PC-9 (cell line): ENCODE measurements at regions of chr18 and their contacts with region 1.

Region 1: DNA sequence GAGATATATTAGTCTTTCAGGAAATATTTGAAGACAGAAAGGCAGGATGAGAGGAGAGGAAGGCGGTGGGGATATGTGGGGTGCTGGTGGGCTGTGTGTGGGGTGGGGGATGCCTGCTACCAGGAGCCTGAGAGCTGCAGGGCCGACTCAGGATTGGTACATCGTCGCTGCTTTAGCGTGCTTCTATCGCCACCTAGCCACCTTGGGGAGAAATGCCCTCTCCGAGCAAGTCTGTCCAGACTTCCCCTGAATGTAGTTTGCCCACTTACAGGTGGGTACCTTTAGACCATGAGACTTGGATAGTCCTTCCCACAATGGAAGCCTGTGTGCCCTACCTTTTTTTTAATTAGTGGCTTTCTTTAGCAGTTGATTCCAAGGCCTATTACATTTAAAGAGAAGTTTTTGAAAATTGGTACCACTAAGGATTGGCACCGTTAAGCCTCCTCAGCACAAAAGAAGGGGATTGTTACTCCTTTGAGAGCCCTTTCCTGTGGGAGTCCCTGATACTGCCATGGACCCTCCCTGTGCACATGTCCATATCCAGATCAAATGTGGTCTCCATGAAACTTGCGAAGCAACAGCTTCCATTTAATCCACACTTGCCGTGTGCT is 114.1 kb upstream of the NDUFV2 start:
- DNase-seq: peak; percentile 43 to 49
- H3K4me3 ChIP-seq: no peak overlapping the region
- H3K27ac ChIP-seq: no peak overlapping the region
- H3K4me1 ChIP-seq: no peaks in the 10 kb centered on the region; the same call in 1 of the 2 replicates
- H3K27me3 ChIP-seq: no peaks in the 10 kb centered on the region
- CTCF ChIP-seq: peak; percentile 85

Region 2: DNA sequence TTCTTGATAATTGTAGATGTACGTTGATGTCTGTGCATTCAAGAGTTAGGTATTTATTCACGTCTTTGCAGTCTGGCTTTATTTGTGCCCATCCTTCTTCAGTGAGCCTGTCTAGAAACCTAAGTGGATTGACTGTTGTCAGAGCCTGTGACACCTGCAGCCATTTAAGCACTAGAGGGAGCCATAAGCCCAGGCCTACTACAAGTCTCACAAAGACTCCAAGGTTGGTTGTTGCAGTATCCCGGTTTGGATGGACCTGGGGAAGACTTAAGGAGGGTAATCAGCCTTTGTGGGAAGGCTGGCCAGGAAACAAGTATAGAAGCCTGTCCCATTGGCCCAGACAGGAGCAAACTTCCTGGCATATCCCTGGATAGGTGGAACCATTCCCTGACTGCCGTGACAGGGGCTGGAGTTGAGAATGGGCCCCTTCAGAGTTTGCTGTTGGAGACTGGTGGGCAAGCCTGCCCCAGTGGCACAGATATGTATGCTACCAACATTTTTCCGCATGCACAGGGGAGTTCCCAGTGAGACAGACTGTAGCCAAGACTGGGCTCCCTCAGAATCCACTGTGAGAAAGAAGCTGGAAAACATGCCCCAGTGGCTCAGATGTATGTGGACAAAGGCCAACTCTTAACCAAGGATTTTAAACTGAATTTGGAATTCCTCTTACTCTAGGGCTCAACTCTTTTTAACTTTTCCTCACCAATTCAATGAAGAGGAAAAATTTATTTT is 1766.8 kb before region 1 on chr18:
- CTCF ChIA-PET with region 1: no interaction called
- POLR2A ChIA-PET with region 1: no interaction called
- intact Hi-C with region 1: loop called (anchors 10 kb)
- DNase-seq: peak; percentile 35 to 46
- H3K4me3 ChIP-seq: no peak overlapping the region
- H3K27ac ChIP-seq: no peak overlapping the region
- H3K4me1 ChIP-seq: no peaks in the 10 kb centered on the region
- H3K27me3 ChIP-seq: peaks cover 17% of the 10 kb centered on the region; the same call in 1 of the 2 replicates
- CTCF ChIP-seq: peak; percentile 76

Region 3: GRCh38 chr18:8426401-8426800 is 562.0 kb before region 1 on chr18:
- CTCF ChIA-PET with region 1: no interaction called
- POLR2A ChIA-PET with region 1: no interaction called
- intact Hi-C with region 1: loop called (anchors 5 kb)
- DNase-seq: no peak
- H3K4me3 ChIP-seq: no peak overlapping the region
- H3K27ac ChIP-seq: no peak overlapping the region
- H3K4me1 ChIP-seq: peaks cover 15% of the 10 kb centered on the region
- H3K27me3 ChIP-seq: no peaks in the 10 kb centered on the region
- CTCF ChIP-seq: peak; percentile 57

Region 4: DNA sequence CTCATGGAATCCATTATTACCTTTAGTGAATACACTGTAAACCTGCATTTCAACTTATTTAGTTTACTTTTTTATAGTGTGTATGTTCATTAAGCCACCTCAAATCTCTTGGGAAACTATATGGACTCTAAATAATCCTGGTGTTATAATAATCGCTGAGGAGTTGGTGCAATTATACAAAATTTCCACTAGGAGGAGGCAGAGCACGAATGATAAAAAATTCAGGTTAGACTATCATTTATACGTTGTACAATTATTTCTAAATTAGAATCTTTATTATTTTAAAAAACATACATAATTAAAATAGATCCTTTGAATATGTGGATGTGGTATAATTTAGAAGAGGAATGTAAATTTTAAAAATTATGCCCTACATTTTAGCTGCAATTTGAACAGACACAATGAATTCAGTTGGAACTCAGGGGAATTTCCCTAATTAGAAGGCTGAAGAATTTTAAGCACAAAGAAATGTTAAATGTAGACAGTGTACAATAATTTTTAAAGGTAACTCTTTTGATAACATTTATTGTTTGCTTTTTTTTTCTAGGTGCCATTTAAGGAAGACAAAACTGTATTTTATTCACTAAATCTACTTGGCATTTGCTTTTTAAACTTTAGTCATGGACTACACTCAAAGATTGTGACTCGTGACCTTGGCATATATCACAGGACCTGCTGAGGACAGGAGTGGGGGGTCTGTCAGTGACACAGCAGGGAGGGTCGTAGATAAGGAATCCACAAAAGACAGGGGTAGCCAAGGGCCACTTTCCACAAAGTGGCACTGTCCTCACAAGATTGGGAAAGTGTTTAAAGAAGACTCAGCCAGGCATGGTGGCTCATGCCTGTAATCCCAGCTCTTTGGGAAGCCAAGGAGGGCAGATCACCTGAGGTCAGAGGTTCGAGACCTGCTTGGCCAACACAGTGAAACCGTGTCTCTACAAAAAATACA is 333.6 kb before region 1 on chr18:
- CTCF ChIA-PET with region 1: interaction called, 7 read pairs
- POLR2A ChIA-PET with region 1: no interaction called
- intact Hi-C with region 1: loop called (anchors 1 kb)
- DNase-seq: no peak
- H3K4me3 ChIP-seq: no peak overlapping the region
- H3K27ac ChIP-seq: no peak overlapping the region
- H3K4me1 ChIP-seq: no peaks in the 10 kb centered on the region; the same call in 1 of the 2 replicates
- H3K27me3 ChIP-seq: no peaks in the 10 kb centered on the region
- CTCF ChIP-seq: peak; percentile 85

Region 5: DNA sequence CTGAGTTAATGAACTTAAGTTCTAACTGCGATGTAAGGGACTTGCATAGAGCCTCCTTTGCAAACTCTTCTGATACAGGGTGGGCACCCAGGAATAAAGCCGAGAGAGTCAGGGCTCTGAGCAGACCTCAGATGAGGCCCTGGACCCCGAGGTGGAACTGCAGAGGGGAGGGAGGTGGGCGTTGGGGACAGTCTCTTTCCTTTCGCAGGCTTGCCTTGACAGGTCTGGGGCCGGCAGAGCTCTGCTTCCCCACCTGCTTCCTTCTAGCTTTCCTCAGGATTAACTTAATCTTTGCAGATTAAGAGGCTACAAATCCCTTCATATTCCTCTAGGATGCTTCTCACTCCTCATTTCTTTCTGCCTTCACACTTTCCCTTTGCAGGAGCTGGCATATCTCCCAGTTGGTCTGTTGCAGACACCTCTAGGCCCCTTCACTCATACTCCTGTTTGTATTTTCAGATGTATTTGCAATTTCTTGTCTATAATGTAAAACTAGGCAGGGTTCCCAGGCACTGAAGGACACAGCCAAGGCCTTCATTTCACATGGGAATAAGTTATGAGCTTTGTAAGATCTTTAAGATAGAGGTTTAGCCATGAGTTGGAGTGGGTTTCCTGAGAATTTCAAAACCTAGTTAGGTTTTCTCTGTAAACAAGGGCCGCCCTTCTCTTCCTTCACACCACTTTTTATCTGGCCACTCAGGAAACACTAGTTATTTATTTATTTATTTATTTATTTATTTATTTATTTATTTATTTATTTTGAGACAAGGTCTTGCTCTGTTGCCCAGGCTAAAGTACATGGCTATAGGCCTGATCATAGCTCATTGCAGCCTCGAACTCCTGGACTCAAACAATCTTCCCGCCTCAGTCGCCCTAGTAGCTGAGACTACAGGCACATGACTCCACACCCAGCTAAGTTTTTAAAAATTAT is 212.1 kb before region 1 on chr18:
- CTCF ChIA-PET with region 1: no interaction called
- POLR2A ChIA-PET with region 1: no interaction called
- intact Hi-C with region 1: no loop called
- DNase-seq: no peak
- H3K4me3 ChIP-seq: no peak overlapping the region
- H3K27ac ChIP-seq: no peak overlapping the region
- H3K4me1 ChIP-seq: no peaks in the 10 kb centered on the region
- H3K27me3 ChIP-seq: no peaks in the 10 kb centered on the region
- CTCF ChIP-seq: no peak

Region 6: GRCh38 chr18:8960740-8961657 is 27.4 kb before region 1 on chr18:
- CTCF ChIA-PET with region 1: no interaction called
- POLR2A ChIA-PET with region 1: no interaction called
- intact Hi-C with region 1: no loop called
- DNase-seq: peak in 1 of 2 experiments; percentile 64
- H3K4me3 ChIP-seq: peak overlapping the region; percentile 33; the same call in 1 of the 2 replicates
- H3K27ac ChIP-seq: peak overlapping the region; percentile 69
- H3K4me1 ChIP-seq: peaks cover 17% of the 10 kb centered on the region
- H3K27me3 ChIP-seq: no peaks in the 10 kb centered on the region
- CTCF ChIP-seq: no peak

Region 7: GRCh38 chr18:9147440-9148202 is 159.3 kb after region 1 on chr18:
- CTCF ChIA-PET with region 1: no interaction called
- POLR2A ChIA-PET with region 1: no interaction called
- intact Hi-C with region 1: loop called (anchors 1 kb)
- DNase-seq: peak; percentile 29 to 48
- H3K4me3 ChIP-seq: no peak overlapping the region
- H3K27ac ChIP-seq: peak overlapping the region; percentile 40
- H3K4me1 ChIP-seq: peaks cover 6% of the 10 kb centered on the region; the same call in 1 of the 2 replicates
- H3K27me3 ChIP-seq: no peaks in the 10 kb centered on the region
- CTCF ChIP-seq: peak; percentile 76

Region 8: DNA sequence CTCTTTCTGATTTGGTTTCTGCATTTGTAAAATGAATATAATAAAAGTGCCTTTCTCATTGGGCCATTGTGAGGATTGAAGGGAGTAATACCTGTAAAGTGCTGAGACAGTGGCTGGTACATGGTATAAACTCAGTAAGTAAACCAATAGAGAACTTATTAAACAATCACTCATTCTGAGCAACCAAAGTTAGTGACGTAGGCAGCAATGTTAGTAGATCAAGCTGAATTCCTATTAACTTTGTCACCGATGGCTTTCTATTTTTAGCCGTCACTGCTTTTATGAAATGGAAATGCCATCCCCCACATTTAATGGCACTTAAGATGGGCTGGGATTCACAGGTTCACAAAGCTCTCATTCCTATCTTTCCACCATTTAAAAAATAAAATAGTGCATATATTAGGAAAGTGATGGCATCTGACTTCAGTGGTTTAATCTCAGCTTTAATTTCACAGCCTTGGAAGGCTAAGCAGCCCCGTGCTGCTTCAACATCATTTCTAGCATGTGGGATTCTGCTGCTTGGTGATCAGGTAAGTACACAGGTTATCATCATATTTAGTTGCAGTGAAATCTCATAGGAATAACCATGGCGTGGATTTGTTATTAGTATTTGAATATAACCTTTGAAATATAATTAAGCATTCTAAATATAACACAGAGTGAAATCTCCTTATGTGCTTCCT is 643.6 kb after region 1 on chr18:
- CTCF ChIA-PET with region 1: interaction called, 10 read pairs
- POLR2A ChIA-PET with region 1: no interaction called
- intact Hi-C with region 1: no loop called
- DNase-seq: peak in 1 of 2 experiments; percentile 88
- H3K4me3 ChIP-seq: no peak overlapping the region; the same call in 1 of the 2 replicates
- H3K27ac ChIP-seq: peak overlapping the region; percentile 65
- H3K4me1 ChIP-seq: peaks cover 37% of the 10 kb centered on the region
- H3K27me3 ChIP-seq: no peaks in the 10 kb centered on the region
- CTCF ChIP-seq: no peak

Region 9: GRCh38 chr18:10499230-10499629 is 1510.9 kb after region 1 on chr18:
- CTCF ChIA-PET with region 1: no interaction called
- POLR2A ChIA-PET with region 1: no interaction called
- intact Hi-C with region 1: no loop called
- DNase-seq: no peak
- H3K4me3 ChIP-seq: no peak overlapping the region
- H3K27ac ChIP-seq: no peak overlapping the region
- H3K4me1 ChIP-seq: no peaks in the 10 kb centered on the region
- H3K27me3 ChIP-seq: no peaks in the 10 kb centered on the region
- CTCF ChIP-seq: no peak